ENCODE measurements at regions of chr4 and their contacts with region 1.

Region 1: DNA sequence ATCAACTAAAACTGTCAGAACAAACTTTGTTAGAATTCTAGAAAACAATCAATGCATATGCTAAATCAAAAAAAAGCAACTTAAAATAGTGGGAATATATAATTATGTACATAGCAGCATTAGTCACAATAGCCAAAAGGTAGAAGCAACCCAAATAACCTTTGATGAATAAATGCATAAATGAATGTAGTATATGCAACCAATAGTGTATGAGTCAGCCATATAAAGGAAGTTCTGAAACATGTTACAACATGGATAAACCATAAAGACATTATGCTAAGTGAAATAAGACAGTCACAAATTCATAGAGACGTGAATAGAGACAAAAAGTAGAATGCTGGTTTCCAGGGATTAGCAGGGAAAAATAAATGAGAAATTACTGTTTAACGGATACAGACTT is 762.8 kb upstream of the INTU start:
- DNase-seq: peak; percentile 20
- ATAC-seq: peak; percentile 59
- H3K4me3 ChIP-seq: no peak overlapping the region
- H3K27ac ChIP-seq: no peak overlapping the region
- H3K4me1 ChIP-seq: no peaks in the 10 kb centered on the region
- H3K27me3 ChIP-seq: no peaks in the 10 kb centered on the region
- CTCF ChIP-seq: no peak

Region 2: DNA sequence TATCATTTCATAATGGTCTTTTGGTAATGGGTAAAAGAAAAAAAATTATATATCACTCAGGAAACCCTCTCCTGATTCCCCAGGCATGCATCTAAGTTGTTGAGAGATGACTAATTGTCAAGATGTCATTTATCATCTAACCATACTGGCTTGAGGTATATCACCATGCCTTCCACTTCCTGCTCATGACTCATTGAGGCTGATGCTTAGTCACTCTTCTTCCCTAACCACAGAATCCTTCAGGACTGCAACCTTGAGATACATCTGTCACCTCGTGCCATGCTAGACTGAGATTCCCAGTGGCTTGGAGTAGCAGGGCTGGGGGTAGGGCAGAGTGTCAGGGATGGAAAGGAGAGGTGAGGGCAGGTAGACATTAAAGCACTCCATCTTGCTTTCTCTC is 19.7 kb before region 1 on chr4:
- CTCF ChIA-PET with region 1: no interaction called
- POLR2A ChIA-PET with region 1: no interaction called
- intact Hi-C with region 1: loop called (anchors 1 kb)
- DNase-seq: peak; percentile 89
- ATAC-seq: peak; percentile 99
- H3K4me3 ChIP-seq: no peak overlapping the region
- H3K27ac ChIP-seq: 0 out of 2 replicates have a peak overlapping the region, but pooled peaks have one; percentile 16
- H3K4me1 ChIP-seq: peaks cover 10% of the 10 kb centered on the region
- H3K27me3 ChIP-seq: no peaks in the 10 kb centered on the region
- CTCF ChIP-seq: no peak

Region 3: GRCh38 chr4:126916626-126917140 is 46.7 kb after region 1 on chr4:
- CTCF ChIA-PET with region 1: no interaction called
- POLR2A ChIA-PET with region 1: no interaction called
- intact Hi-C with region 1: no loop called
- DNase-seq: no peak
- ATAC-seq: no peak
- H3K4me3 ChIP-seq: no peak overlapping the region
- H3K27ac ChIP-seq: no peak overlapping the region
- H3K4me1 ChIP-seq: no peaks in the 10 kb centered on the region
- H3K27me3 ChIP-seq: no peaks in the 10 kb centered on the region
- CTCF ChIP-seq: no peak

Measured in PC-3 (cell line).